WTC11 (cell line): ENCODE measurements at regions of chr22 and their contacts with region 1.

Region 1: DNA sequence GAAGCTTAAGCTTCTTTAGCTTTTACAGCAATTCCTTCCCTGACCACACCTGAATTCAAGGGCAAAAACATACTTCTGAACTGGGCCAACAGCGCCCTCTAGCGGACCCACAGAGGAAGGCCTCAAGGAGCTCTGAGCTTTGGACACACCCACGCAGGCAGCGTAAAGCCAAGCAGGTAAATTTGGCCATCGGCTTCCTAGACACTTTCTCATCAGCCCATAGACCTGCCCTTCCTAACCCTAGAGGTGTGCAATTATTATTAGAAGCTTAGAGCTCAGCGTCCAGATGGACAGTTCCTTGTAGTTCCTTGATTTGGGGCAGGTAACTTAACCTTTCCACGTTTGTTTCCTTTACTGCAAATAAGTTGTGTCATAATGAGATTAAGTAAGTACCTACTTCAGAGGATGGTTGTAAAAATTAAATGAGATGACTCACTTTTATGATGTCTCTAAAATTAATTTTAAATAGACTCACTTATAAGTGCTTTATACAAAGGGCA is 25.7 kb upstream of the HMGXB4 start:
- DNase-seq: peak; percentile 85
- ATAC-seq: peak; percentile 95
- H3K4me3 Mint-ChIP-seq: no peak overlapping the region
- H3K27ac Mint-ChIP-seq: no peak overlapping the region
- H3K4me1 Mint-ChIP-seq: peaks cover 31% of the 10 kb centered on the region
- H3K27me3 Mint-ChIP-seq: peaks cover 21% of the 10 kb centered on the region
- CTCF ChIP-seq: peak; percentile 99

Region 2: GRCh38 chr22:35140879-35141745 is 90.5 kb before region 1 on chr22:
- CTCF ChIA-PET with region 1: interaction called, 24 read pairs
- POLR2A ChIA-PET with region 1: no interaction called
- DNase-seq: peak; percentile 81
- ATAC-seq: peak; percentile 93
- H3K4me3 Mint-ChIP-seq: no peak overlapping the region
- H3K27ac Mint-ChIP-seq: no peak overlapping the region; the same call in 1 of the 2 replicates
- H3K4me1 Mint-ChIP-seq: no peaks in the 10 kb centered on the region; the same call in 1 of the 2 replicates
- H3K27me3 Mint-ChIP-seq: no peaks in the 10 kb centered on the region; the same call in 1 of the 2 replicates
- CTCF ChIP-seq: peak; percentile 53

Region 3: DNA sequence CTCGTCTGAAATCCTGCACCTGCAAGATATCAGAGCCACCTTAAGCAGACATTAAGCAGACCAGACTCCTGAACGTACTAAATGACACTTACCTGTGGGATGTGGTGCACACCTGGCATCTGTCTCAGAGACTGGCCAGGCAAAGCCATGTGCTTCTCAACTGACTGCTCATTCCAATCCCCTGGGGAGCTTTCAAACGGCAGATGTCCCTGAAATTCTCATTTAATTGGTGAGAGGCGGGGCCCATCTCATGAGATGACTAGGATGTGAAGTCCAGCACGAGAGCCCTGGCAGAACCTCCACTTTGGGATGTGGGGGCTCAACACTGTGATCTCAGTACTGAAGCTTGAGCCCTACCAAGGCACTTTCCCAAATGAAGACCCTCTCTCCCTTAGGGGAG is 59.2 kb before region 1 on chr22:
- CTCF ChIA-PET with region 1: interaction called, 27 read pairs
- POLR2A ChIA-PET with region 1: no interaction called
- DNase-seq: no peak
- ATAC-seq: no peak
- H3K4me3 Mint-ChIP-seq: no peak overlapping the region
- H3K27ac Mint-ChIP-seq: no peak overlapping the region
- H3K4me1 Mint-ChIP-seq: peaks cover 6% of the 10 kb centered on the region
- H3K27me3 Mint-ChIP-seq: peaks cover 19% of the 10 kb centered on the region
- CTCF ChIP-seq: no peak

Region 4: DNA sequence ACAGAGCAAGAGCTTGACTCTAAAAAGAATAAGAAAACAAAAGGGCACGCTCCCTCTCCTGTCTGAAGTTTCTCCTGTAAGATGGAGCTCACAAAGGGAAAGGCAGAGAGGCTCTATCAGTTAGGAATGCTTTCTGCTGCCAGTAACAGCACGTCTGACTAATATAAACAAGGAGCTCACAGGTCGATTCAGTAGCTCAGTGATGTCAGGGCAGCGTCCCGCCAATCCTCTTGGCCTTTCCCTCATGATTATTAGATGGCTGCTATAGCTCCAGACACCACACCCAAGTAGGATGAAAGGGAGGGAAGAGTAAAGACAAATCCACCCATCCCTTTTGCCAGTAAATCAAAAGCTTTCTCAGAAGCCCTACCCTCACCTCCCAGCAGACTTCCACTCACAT is 25.7 kb before region 1 on chr22:
- CTCF ChIA-PET with region 1: interaction called, 32 read pairs
- POLR2A ChIA-PET with region 1: no interaction called
- DNase-seq: no peak
- ATAC-seq: no peak
- H3K4me3 Mint-ChIP-seq: no peak overlapping the region
- H3K27ac Mint-ChIP-seq: no peak overlapping the region; the same call in 1 of the 2 replicates
- H3K4me1 Mint-ChIP-seq: no peaks in the 10 kb centered on the region
- H3K27me3 Mint-ChIP-seq: no peaks in the 10 kb centered on the region
- CTCF ChIP-seq: no peak

Region 5: GRCh38 chr22:35257321-35258190 is 25.9 kb after region 1 on chr22 and contains the start of gene HMGXB4:
- CTCF ChIA-PET with region 1: interaction called, 18 read pairs
- POLR2A ChIA-PET with region 1: no interaction called
- DNase-seq: peak; percentile 85
- ATAC-seq: peak; percentile 77
- H3K4me3 Mint-ChIP-seq: peak within 1 kb of the TSS; percentile 90
- H3K27ac Mint-ChIP-seq: peak within 1 kb of the TSS; percentile 96
- H3K4me1 Mint-ChIP-seq: peaks cover 26% of the 10 kb centered on the region
- H3K27me3 Mint-ChIP-seq: 0 out of 2 replicates have a peak, but pooled peaks cover 2% of the 10 kb centered on the region
- CTCF ChIP-seq: no peak
- total RNA-seq, gene HMGXB4: 34.6 to 42.1 TPM (median 36.8 TPM) in 3 replicates

Region 6: GRCh38 chr22:35477911-35478582 is 246.4 kb after region 1 on chr22:
- CTCF ChIA-PET with region 1: no interaction called
- POLR2A ChIA-PET with region 1: no interaction called
- DNase-seq: no peak
- ATAC-seq: no peak
- H3K4me3 Mint-ChIP-seq: no peak overlapping the region
- H3K27ac Mint-ChIP-seq: 0 out of 2 replicates have a peak overlapping the region, but pooled peaks have one; percentile 32
- H3K4me1 Mint-ChIP-seq: peaks cover 9% of the 10 kb centered on the region
- H3K27me3 Mint-ChIP-seq: peaks cover 7% of the 10 kb centered on the region
- CTCF ChIP-seq: no peak